ENCODE measurements at regions of chr1 and their contacts with region 1.

Region 1: DNA sequence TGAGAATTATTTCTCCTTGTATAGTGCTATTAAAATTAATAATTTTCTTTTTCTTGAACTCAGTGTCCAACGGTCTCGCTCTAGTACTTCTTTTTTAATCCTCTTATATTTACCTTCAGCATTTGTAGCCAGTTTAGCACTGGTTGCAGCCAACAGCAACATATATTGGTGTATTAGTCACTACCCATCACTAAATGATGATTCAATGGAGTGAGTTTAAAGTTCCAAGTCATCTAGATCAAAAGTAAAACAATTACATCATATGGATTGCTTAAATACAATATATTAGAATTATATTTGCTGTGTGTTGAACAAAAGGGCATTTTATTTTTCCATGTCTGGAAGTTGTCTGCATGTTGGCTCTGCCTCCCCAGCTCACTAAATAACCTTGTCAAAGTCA is 591.8 kb downstream of the ADGRL2 start:
- DNase-seq: no peak
- H3K4me3 ChIP-seq: no peak overlapping the region
- H3K27ac ChIP-seq: no peak overlapping the region
- H3K4me1 ChIP-seq: no peaks in the 10 kb centered on the region
- H3K27me3 ChIP-seq: no peaks in the 10 kb centered on the region
- CTCF ChIP-seq: no peak
- EP300 ChIP-seq: no peak
- POLR2A ChIP-seq: no peak

Region 2: GRCh38 chr1:84253891-84254290 is 1861.4 kb after region 1 on chr1:
- intact Hi-C with region 1: loop called in 1 of 4 experiments (anchors 5 kb)
- DNase-seq: no peak
- H3K4me3 ChIP-seq: no peak overlapping the region
- H3K27ac ChIP-seq: no peak overlapping the region
- H3K4me1 ChIP-seq: no peaks in the 10 kb centered on the region
- H3K27me3 ChIP-seq: no peaks in the 10 kb centered on the region
- CTCF ChIP-seq: no peak
- EP300 ChIP-seq: no peak
- POLR2A ChIP-seq: no peak

Measured in ovary (tissue), 10 donors.